ENCODE measurements at regions of chr21 and their contacts with region 1.

Region 1: GRCh38 chr21:35138665-35139381 is 89.7 kb upstream of the RUNX1 start:
- DNase-seq: peak; percentile 12 to 59
- H3K4me3 ChIP-seq: no peak overlapping the region
- H3K4me3 Mint-ChIP-seq: no peak overlapping the region
- H3K27ac Mint-ChIP-seq: peak overlapping the region; percentile 57
- H3K4me1 ChIP-seq: peaks cover 36% of the 10 kb centered on the region
- H3K4me1 Mint-ChIP-seq: peaks cover 29% of the 10 kb centered on the region
- H3K27me3 ChIP-seq: no peaks in the 10 kb centered on the region
- H3K27me3 Mint-ChIP-seq: no peaks in the 10 kb centered on the region
- CTCF ChIP-seq: no peak

Region 2: GRCh38 chr21:35051287-35051818 is 87.5 kb before region 1 on chr21:
- CTCF ChIA-PET with region 1: no interaction called
- POLR2A ChIA-PET with region 1: no interaction called
- intact Hi-C with region 1: loop called (anchors 5 kb)
- DNase-seq: peak; percentile 58 to 66
- H3K4me3 ChIP-seq: no peak overlapping the region
- H3K4me3 Mint-ChIP-seq: no peak overlapping the region
- H3K27ac Mint-ChIP-seq: no peak overlapping the region
- H3K4me1 ChIP-seq: peaks cover 14% of the 10 kb centered on the region; the same call in 1 of the 2 replicates
- H3K4me1 Mint-ChIP-seq: peaks cover 16% of the 10 kb centered on the region
- H3K27me3 ChIP-seq: no peaks in the 10 kb centered on the region
- H3K27me3 Mint-ChIP-seq: no peaks in the 10 kb centered on the region
- CTCF ChIP-seq: peak; percentile 23 to 42

Region 3: GRCh38 chr21:35342440-35342839 is 203.6 kb after region 1 on chr21:
- CTCF ChIA-PET with region 1: no interaction called
- POLR2A ChIA-PET with region 1: no interaction called
- intact Hi-C with region 1: no loop called
- DNase-seq: no peak
- H3K4me3 ChIP-seq: no peak overlapping the region
- H3K4me3 Mint-ChIP-seq: no peak overlapping the region
- H3K27ac Mint-ChIP-seq: no peak overlapping the region
- H3K4me1 ChIP-seq: peaks cover 5% of the 10 kb centered on the region; the same call in 1 of the 2 replicates
- H3K4me1 Mint-ChIP-seq: peaks cover 8% of the 10 kb centered on the region
- H3K27me3 ChIP-seq: no peaks in the 10 kb centered on the region
- H3K27me3 Mint-ChIP-seq: peaks cover 2% of the 10 kb centered on the region
- CTCF ChIP-seq: no peak

Measured in Caco-2 (cell line).